ENCODE measurements at regions of chr3 and their contacts with region 1.

Region 1: DNA sequence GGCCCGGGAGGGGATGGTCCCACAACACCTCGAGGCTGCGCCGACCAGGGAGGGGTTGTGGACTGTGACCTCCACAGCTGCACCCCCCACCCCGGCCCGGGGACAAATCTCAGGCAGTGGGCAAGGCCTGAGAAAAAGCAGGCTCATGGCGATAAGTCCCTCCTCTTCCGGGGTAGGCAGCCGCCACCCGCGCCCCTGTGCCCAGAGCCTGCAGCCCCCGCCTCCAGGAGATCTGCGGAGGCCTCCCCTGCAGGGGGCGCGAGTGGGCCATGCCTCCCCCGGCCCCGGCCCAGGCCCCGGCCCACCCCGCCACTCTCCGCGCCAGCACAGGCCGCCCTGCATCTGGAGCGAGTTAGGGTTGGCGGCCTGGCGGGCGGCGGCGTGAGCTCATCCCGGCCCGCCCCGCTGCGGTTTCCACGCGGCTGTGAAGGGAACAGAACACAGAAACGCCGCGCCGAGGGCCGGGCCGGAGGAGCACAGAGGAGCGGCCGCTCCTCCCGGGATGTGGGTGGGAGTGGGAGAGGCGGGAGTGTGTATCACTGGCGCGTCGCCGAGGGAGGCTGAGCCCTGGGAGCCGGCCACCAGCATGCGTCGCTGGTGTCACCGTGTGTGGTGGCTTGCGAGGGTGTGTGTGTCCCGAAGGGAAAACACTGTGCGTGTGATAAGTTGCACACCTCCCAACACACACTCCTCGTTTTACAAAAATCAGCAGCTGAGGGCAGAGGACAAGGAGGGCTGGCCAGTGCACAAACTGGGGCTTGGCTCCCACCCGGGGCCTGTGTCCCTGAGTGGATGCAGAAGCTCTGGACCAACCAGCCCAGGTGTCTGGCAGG is 17.2 kb downstream of the MYL3 start:
- DNase-seq: peak; percentile 18
- H3K4me3 ChIP-seq: peak overlapping the region in 2 of 3 experiments; percentile 34 to 48
- H3K27ac ChIP-seq: no peak overlapping the region
- H3K4me1 ChIP-seq: peaks cover 14% of the 10 kb centered on the region
- H3K27me3 ChIP-seq: no peaks in the 10 kb centered on the region
- CTCF ChIP-seq: peak in 1 of 2 donors; percentile 46

Region 2: DNA sequence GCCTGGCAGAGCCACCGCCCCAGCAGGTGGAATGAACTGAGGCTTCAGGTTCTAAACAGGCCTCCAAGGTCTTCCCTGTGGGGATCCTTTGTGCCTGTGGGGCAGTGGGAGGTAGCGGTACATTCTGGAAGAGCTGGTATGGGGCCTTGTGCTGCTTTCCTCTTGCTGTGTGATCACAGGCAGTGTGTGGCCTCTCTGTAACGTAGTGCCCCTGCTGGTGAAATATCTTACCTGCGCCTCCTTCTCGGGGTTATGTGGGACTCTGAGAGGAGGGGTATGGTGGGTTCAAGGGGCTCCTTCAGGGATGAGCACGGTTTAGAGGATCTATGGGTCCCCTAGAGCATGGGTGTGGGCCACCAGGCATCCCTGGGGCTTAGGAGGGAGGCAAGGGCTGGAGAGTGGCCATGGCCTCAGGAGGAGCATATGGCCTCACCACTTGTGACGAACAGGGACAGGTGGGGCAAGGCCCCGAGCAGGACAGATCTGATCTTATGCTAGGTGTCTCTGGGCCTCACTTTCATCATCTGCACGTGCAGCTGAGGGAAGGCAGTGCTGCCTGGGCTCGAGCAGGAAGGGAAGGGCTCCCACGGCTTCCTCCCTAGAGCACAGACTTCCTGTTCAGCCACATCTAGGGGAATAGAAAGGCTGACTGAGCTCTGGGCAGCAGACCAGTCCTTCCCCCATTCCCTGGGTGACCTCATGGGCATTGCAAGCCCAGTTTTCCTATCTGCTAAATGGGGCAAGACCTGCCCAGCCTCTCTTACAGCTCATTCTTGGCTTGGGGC is 150.6 kb before region 1 on chr3:
- CTCF ChIA-PET with region 1: no interaction called
- dilution Hi-C with region 1: loop called (anchors 25 kb)
- in situ Hi-C with region 1: no loop called
- intact Hi-C with region 1: no loop called
- DNase-seq: no peak
- H3K4me3 ChIP-seq: no peak overlapping the region
- H3K27ac ChIP-seq: no peak overlapping the region
- H3K4me1 ChIP-seq: peaks cover 42% of the 10 kb centered on the region
- H3K27me3 ChIP-seq: no peaks in the 10 kb centered on the region
- CTCF ChIP-seq: peak; percentile 34 to 42

Region 3: GRCh38 chr3:47065681-47066080 is 219.7 kb after region 1 on chr3:
- CTCF ChIA-PET with region 1: no interaction called
- dilution Hi-C with region 1: no loop called
- in situ Hi-C with region 1: no loop called
- intact Hi-C with region 1: no loop called
- DNase-seq: no peak
- H3K4me3 ChIP-seq: no peak overlapping the region
- H3K27ac ChIP-seq: no peak overlapping the region
- H3K4me1 ChIP-seq: no peaks in the 10 kb centered on the region
- H3K27me3 ChIP-seq: no peaks in the 10 kb centered on the region
- CTCF ChIP-seq: no peak